ENCODE measurements at regions of chr18 and their contacts with region 1.

Region 1: GRCh38 chr18:62944454-62944853 is 229.1 kb downstream of the PHLPP1 start:
- DNase-seq: no peak
- CTCF ChIP-seq: no peak

Region 2: GRCh38 chr18:62714671-62715435 is 229.6 kb before region 1 on chr18:
- in situ Hi-C with region 1: loop called (anchors 10 kb)
- DNase-seq: peak; percentile 94
- CTCF ChIP-seq: peak; percentile 80